ENCODE measurements at regions of chr16 and their contacts with region 1.

Region 1: DNA sequence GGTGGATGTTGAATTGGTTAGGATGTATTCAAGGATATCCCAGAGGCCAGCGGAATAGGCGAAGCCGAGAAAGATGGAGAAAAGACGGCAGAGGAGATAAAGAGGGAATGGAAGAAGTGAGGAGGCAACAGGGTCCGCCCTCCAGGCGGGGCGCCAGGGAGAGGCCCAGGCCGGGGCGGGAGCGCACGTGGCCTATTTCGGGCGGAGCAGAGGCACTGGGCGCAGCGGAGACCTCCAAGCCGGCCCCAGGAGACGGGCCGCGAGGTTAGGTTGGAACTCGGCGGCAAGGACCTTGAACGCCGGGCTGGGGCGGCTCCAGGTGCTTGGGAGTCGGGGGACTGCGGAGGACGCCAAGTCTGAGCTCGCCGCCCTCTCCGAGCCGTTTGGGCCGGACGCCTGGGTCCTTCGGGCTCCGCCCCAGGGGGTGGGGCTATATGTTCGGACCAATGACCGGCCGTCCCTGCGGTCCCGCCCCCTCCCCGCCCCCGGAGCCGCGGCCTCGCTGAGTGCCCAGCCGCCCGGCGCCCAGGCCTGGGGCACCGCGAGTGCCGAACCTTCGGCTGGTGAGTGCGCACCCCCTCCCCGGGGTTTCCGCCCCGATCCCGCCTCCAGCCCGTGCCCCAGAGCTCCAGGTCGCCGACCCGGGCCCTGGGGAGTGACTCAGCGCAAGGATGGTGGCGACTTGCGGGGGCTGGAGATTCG is at the start of gene ZNF771:
- DNase-seq: peak; percentile 76 to 85 (median 81)
- H3K4me3 ChIP-seq: peak within 1 kb of the TSS; percentile 42 to 65
- H3K4me3 Mint-ChIP-seq: peak within 1 kb of the TSS; percentile 91 to 100 (median 97)
- H3K27ac ChIP-seq: peak within 1 kb of the TSS; percentile 59
- H3K27ac Mint-ChIP-seq: peak within 1 kb of the TSS; percentile 88 to 95 (median 93)
- H3K4me1 ChIP-seq: peaks cover 24% of the 10 kb centered on the region
- H3K4me1 Mint-ChIP-seq: peaks cover 19 to 33% (median 24%) of the 10 kb centered on the region in 4 donors
- H3K27me3 ChIP-seq: no peaks in the 10 kb centered on the region
- H3K27me3 Mint-ChIP-seq: no peaks in the 10 kb centered on the region
- total RNA-seq, gene ZNF771: 6.0 to 6.5 TPM

Region 2: DNA sequence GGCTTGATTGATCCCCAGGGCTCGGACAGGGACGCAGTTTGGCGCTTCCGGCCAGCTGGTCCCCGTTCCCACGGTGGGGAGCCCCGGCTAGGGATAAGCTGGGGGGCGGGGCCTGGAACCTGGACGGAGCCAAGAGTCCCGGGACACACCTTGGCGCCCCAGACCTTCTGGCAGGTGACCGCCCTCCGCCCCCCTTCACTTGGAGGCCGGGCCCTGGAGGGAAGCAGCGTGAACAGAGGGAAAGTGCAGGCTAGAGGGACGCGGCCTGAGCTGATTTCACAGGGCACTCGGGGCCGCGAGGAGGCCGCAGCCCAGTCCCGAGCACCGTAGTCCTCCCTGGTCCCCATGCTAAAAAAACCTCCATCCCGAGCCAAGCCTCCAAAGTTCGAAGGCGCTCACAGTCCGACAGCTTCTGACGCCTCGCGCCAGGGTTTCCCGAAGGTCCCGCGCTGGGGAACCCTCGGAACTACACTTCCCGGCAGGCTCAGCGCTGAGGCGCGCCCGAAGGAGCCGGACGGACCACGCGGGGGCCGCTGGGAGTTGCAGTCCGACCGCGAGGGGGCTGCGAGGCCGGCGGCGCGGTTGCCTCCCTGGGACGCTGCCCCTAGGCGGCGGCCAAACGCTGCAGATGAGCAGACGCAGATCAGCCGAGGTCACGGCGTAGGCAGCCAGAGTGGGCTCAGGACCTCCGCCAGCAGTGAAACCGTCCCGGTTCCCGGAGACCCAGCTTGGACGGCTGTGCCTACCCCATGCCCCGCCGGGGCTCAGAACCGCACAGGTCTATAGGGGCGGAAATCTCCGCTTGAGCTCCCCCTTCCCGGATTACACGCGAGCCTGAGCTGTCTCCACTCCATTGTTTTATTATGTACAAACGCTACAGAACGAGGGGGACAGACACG is 315.5 kb before region 1 on chr16 and contains the start of gene TBX6:
- CTCF ChIA-PET with region 1: interaction called, 10 read pairs
- POLR2A ChIA-PET with region 1: interaction called, 21 read pairs
- intact Hi-C with region 1: loop called (anchors 1 kb)
- DNase-seq: peak; percentile 90 to 93 (median 91)
- H3K4me3 ChIP-seq: peak within 1 kb of the TSS in 1 of 2 donors; percentile 72
- H3K4me3 Mint-ChIP-seq: peak within 1 kb of the TSS; percentile 87 to 95 (median 90)
- H3K27ac ChIP-seq: peak within 1 kb of the TSS; percentile 75
- H3K27ac Mint-ChIP-seq: peak within 1 kb of the TSS; percentile 84 to 98 (median 95)
- H3K4me1 ChIP-seq: peaks cover 60% of the 10 kb centered on the region
- H3K4me1 Mint-ChIP-seq: peaks cover 27 to 65% (median 42%) of the 10 kb centered on the region in 4 donors
- H3K27me3 ChIP-seq: no peaks in the 10 kb centered on the region
- H3K27me3 Mint-ChIP-seq: no peaks in the 10 kb centered on the region
- total RNA-seq, gene TBX6: 1.3 to 1.4 TPM

Region 3: GRCh38 chr16:30166202-30166902 is 240.9 kb before region 1 on chr16:
- CTCF ChIA-PET with region 1: no interaction called
- POLR2A ChIA-PET with region 1: no interaction called
- intact Hi-C with region 1: no loop called
- DNase-seq: peak in 1 of 5 donors; percentile 20
- H3K4me3 ChIP-seq: no peak overlapping the region
- H3K4me3 Mint-ChIP-seq: peak overlapping the region in 7 of 8 donors; percentile 25 to 85 (median 49)
- H3K27ac ChIP-seq: no peak overlapping the region
- H3K27ac Mint-ChIP-seq: peak overlapping the region in 4 of 7 donors; percentile 60 to 87 (median 76)
- H3K4me1 ChIP-seq: peaks cover 11% of the 10 kb centered on the region
- H3K4me1 Mint-ChIP-seq: peaks cover 20 to 39% (median 29%) of the 10 kb centered on the region in 4 donors
- H3K27me3 ChIP-seq: no peaks in the 10 kb centered on the region
- H3K27me3 Mint-ChIP-seq: no peaks in the 10 kb centered on the region

Region 4: DNA sequence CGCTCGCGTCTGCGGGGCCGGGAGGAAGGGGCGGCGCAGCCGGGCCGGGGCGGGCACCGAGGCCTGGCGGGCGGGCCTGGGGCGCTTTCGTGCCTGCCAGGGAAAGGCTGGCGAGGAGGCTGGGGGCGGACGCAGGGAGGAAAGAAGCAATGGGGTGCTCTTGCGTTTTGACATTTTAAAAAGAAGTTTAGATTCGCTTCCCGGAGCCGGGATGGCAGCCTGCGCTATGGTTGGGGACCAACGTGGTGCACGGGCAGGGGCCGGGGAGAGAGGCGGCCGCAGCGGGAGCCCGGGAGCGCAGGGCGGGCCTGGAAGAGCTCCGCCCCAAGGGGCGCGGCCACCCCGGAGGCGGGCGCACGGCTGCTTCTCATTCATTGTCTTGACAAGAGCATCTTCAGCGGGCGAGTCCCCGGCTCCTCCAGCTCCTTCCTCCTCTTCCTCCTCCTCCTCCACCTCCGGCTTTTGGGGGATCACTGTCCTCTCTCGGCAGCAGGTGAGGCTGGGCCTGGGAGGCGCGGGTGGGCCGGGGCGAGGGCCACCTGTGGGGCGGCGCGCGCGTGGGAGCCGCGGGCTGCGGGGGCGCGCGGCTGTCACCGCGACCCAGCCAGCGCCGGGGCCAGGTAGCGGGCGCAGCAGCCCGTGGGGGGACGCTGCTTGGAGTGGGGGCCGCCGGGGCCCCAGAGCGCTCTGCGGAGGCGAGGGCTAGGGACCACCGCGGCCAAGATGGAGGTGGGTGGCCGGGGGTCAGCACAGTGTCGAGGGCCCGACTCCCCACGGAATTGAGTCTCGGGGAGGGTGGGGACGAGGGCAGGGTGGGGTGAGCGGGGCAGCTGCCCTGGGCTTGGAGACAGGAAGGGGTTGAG is 223.8 kb before region 1 on chr16 and contains the start of gene CORO1A:
- CTCF ChIA-PET with region 1: interaction called, 3 read pairs
- POLR2A ChIA-PET with region 1: interaction called, 16 read pairs
- intact Hi-C with region 1: no loop called
- DNase-seq: peak; percentile 80 to 87 (median 84)
- H3K4me3 ChIP-seq: peak within 1 kb of the TSS; percentile 91 to 93
- H3K4me3 Mint-ChIP-seq: peak within 1 kb of the TSS; percentile 94 to 99 (median 98)
- H3K27ac ChIP-seq: peak within 1 kb of the TSS; percentile 77
- H3K27ac Mint-ChIP-seq: peak within 1 kb of the TSS; percentile 96 to 99 (median 97)
- H3K4me1 ChIP-seq: peaks cover 40% of the 10 kb centered on the region
- H3K4me1 Mint-ChIP-seq: peaks cover 15 to 59% (median 29%) of the 10 kb centered on the region in 4 donors
- H3K27me3 ChIP-seq: no peaks in the 10 kb centered on the region
- H3K27me3 Mint-ChIP-seq: no peaks in the 10 kb centered on the region
- total RNA-seq, gene CORO1A: 745 to 769 TPM

Region 5: DNA sequence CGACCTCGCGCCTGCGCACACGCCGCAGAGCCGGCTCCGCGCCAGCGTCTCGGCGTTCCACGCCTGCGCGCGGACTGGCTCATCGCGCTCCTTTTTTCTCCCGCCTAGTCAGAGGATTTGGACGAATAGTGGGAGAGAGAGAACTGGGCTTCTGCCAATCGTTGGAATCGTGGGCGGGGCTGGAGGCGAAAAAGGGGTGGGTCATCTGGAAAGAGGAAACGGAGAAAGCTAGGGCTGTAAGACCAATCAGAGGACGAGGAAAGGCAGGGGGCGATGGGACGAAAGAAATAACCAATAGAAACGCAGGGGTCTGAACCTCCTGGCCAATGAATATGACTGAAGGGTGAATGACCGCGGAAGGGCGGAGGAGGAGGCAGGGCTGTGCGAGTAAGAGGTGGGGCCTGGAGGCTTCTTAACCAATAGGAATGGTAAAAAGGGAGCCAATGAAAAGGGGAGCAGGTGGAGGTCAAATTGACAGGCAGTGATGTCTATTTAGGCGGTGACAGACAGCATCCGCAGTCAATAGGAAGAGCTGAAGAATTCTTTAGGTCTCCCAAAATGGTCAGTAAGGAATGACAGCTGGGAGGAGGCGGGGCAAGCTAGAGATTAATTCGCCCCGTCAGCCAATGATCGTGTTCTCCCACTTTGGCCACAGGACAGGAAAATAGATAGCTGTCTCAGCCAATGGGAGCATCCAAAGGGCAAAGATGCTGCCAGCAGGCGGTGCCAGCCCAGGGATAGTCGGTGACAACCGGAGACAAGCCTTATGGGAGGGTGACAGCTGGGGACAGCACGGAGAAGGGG is 36.6 kb before region 1 on chr16 and contains the start of gene TBC1D10B:
- CTCF ChIA-PET with region 1: interaction called, 41 read pairs
- POLR2A ChIA-PET with region 1: interaction called, 30 read pairs
- intact Hi-C with region 1: loop called (anchors 1 kb)
- DNase-seq: peak; percentile 99 to 100 (median 100)
- H3K4me3 ChIP-seq: peak within 1 kb of the TSS; percentile 67 to 88
- H3K4me3 Mint-ChIP-seq: peak within 1 kb of the TSS; percentile 87 to 94 (median 90)
- H3K27ac ChIP-seq: peak within 1 kb of the TSS; percentile 72
- H3K27ac Mint-ChIP-seq: peak within 1 kb of the TSS; percentile 83 to 99 (median 95)
- H3K4me1 ChIP-seq: peaks cover 46% of the 10 kb centered on the region
- H3K4me1 Mint-ChIP-seq: peaks cover 43 to 60% (median 49%) of the 10 kb centered on the region in 4 donors
- H3K27me3 ChIP-seq: no peaks in the 10 kb centered on the region
- H3K27me3 Mint-ChIP-seq: peaks cover 0 to 2% of the 10 kb centered on the region in 2 donors
- total RNA-seq, gene TBC1D10B: 47.0 to 55.3 TPM

Region 6: GRCh38 chr16:30417529-30418349 is 10.5 kb after region 1 on chr16:
- CTCF ChIA-PET with region 1: interaction called, 22 read pairs
- POLR2A ChIA-PET with region 1: interaction called, 32 read pairs
- intact Hi-C with region 1: no loop called
- DNase-seq: peak; percentile 89 to 93 (median 91)
- H3K4me3 ChIP-seq: peak overlapping the region; percentile 12 to 68
- H3K4me3 Mint-ChIP-seq: peak overlapping the region; percentile 39 to 85 (median 68)
- H3K27ac ChIP-seq: peak overlapping the region; percentile 61
- H3K27ac Mint-ChIP-seq: peak overlapping the region in 3 of 7 donors; percentile 41 to 90 (median 74)
- H3K4me1 ChIP-seq: peaks cover 15% of the 10 kb centered on the region
- H3K4me1 Mint-ChIP-seq: peaks cover 6 to 24% (median 13%) of the 10 kb centered on the region in 4 donors
- H3K27me3 ChIP-seq: no peaks in the 10 kb centered on the region
- H3K27me3 Mint-ChIP-seq: no peaks in the 10 kb centered on the region